B cell (primary cell): ENCODE measurements at regions of chr1 and their contacts with region 1.

Region 1: DNA sequence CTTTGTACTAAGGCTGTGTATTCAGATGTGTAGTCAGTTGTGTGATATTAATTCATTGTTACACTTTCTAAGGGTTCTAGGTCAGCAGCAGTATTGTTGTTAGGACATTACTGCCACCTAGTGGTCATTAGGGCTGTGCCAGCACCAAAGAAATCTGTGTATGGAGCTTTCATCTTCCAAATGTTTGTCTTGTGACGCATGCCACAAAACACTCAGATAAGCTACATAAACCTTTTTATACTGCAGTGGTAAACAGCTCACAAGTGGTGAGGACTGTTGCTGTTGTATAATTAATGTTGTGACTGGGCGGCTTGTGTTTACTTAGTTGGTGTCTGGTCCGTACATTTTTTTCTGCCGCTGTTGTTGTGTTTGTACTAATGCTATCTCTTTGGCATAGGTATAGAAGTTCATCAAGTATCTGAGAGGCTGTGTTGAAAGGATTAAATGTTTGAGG is 51.7 kb downstream of the S1PR1 start:
- DNase-seq: peak; percentile 83
- ATAC-seq: peak; percentile 85
- H3K4me3 ChIP-seq: no peak overlapping the region
- H3K4me3 Mint-ChIP-seq: no peak overlapping the region
- H3K27ac ChIP-seq: no peak overlapping the region
- H3K27ac Mint-ChIP-seq: peak overlapping the region; percentile 47
- H3K4me1 ChIP-seq: peaks cover 24 to 42% of the 10 kb centered on the region in 2 donors
- H3K4me1 Mint-ChIP-seq: peaks cover 34% of the 10 kb centered on the region
- H3K27me3 ChIP-seq: no peaks in the 10 kb centered on the region
- H3K27me3 Mint-ChIP-seq: no peaks in the 10 kb centered on the region
- CTCF ChIP-seq: peak; percentile 93

Region 2: GRCh38 chr1:100950781-100951180 is 337.7 kb before region 1 on chr1:
- CTCF ChIA-PET with region 1: interaction called, 17 read pairs
- POLR2A ChIA-PET with region 1: interaction called, 6 read pairs
- intact Hi-C with region 1: no loop called
- DNase-seq: no peak
- ATAC-seq: no peak
- H3K4me3 ChIP-seq: no peak overlapping the region
- H3K4me3 Mint-ChIP-seq: peak overlapping the region; percentile 67
- H3K27ac ChIP-seq: peak overlapping the region; percentile 34 to 50
- H3K27ac Mint-ChIP-seq: peak overlapping the region; percentile 65
- H3K4me1 ChIP-seq: peaks cover 33% of the 10 kb centered on the region in 2 donors
- H3K4me1 Mint-ChIP-seq: peaks cover 59% of the 10 kb centered on the region
- H3K27me3 ChIP-seq: no peaks in the 10 kb centered on the region
- H3K27me3 Mint-ChIP-seq: no peaks in the 10 kb centered on the region
- CTCF ChIP-seq: no peak

Region 3: GRCh38 chr1:101025657-101026504 is 262.6 kb before region 1 on chr1 and contains the start of gene DPH5:
- CTCF ChIA-PET with region 1: interaction called, 12 read pairs
- POLR2A ChIA-PET with region 1: no interaction called
- intact Hi-C with region 1: loop called (anchors 5 kb)
- DNase-seq: peak; percentile 90
- ATAC-seq: peak; percentile 96
- H3K4me3 ChIP-seq: peak within 1 kb of the TSS; percentile 81 to 97 (median 92)
- H3K4me3 Mint-ChIP-seq: peak within 1 kb of the TSS; percentile 98
- H3K27ac ChIP-seq: peak within 1 kb of the TSS; percentile 78 to 85
- H3K27ac Mint-ChIP-seq: peak within 1 kb of the TSS; percentile 97
- H3K4me1 ChIP-seq: peaks cover 45 to 47% of the 10 kb centered on the region in 2 donors
- H3K4me1 Mint-ChIP-seq: peaks cover 50% of the 10 kb centered on the region
- H3K27me3 ChIP-seq: no peaks in the 10 kb centered on the region
- H3K27me3 Mint-ChIP-seq: no peaks in the 10 kb centered on the region
- CTCF ChIP-seq: no peak
- total RNA-seq, gene DPH5: 39.4 and 42.5 TPM in 2 replicates

Region 4: GRCh38 chr1:101112051-101112780 is 176.3 kb before region 1 on chr1:
- CTCF ChIA-PET with region 1: interaction called, 64 read pairs
- POLR2A ChIA-PET with region 1: no interaction called
- intact Hi-C with region 1: loop called (anchors 1 kb)
- DNase-seq: peak; percentile 90
- ATAC-seq: peak; percentile 95
- H3K4me3 ChIP-seq: peak overlapping the region in 1 of 5 experiments; percentile 14
- H3K4me3 Mint-ChIP-seq: peak overlapping the region; percentile 79
- H3K27ac ChIP-seq: peak overlapping the region; percentile 80 to 95
- H3K27ac Mint-ChIP-seq: peak overlapping the region; percentile 89
- H3K4me1 ChIP-seq: peaks cover 28 to 31% of the 10 kb centered on the region in 2 donors
- H3K4me1 Mint-ChIP-seq: peaks cover 39% of the 10 kb centered on the region
- H3K27me3 ChIP-seq: no peaks in the 10 kb centered on the region
- H3K27me3 Mint-ChIP-seq: no peaks in the 10 kb centered on the region
- CTCF ChIP-seq: peak; percentile 32

Region 5: GRCh38 chr1:101238681-101239094 is 49.8 kb before region 1 on chr1:
- CTCF ChIA-PET with region 1: interaction called, 257 read pairs
- POLR2A ChIA-PET with region 1: interaction called, 11 read pairs
- intact Hi-C with region 1: loop called (anchors 1 kb)
- DNase-seq: peak; percentile 83
- ATAC-seq: peak; percentile 13
- H3K4me3 ChIP-seq: peak overlapping the region; percentile 74 to 98 (median 86)
- H3K4me3 Mint-ChIP-seq: peak overlapping the region; percentile 97
- H3K27ac ChIP-seq: peak overlapping the region; percentile 58 to 84
- H3K27ac Mint-ChIP-seq: peak overlapping the region; percentile 92
- H3K4me1 ChIP-seq: peaks cover 51 to 59% of the 10 kb centered on the region in 2 donors
- H3K4me1 Mint-ChIP-seq: peaks cover 66% of the 10 kb centered on the region
- H3K27me3 ChIP-seq: no peaks in the 10 kb centered on the region
- H3K27me3 Mint-ChIP-seq: no peaks in the 10 kb centered on the region
- CTCF ChIP-seq: peak; percentile 95

Region 6: GRCh38 chr1:101302831-101303511 is 14.5 kb after region 1 on chr1:
- CTCF ChIA-PET with region 1: interaction called, 47 read pairs
- POLR2A ChIA-PET with region 1: no interaction called
- intact Hi-C with region 1: no loop called
- DNase-seq: no peak
- ATAC-seq: no peak
- H3K4me3 ChIP-seq: no peak overlapping the region
- H3K4me3 Mint-ChIP-seq: no peak overlapping the region
- H3K27ac ChIP-seq: no peak overlapping the region
- H3K27ac Mint-ChIP-seq: no peak overlapping the region
- H3K4me1 ChIP-seq: peaks cover 8 to 12% of the 10 kb centered on the region in 2 donors
- H3K4me1 Mint-ChIP-seq: peaks cover 15% of the 10 kb centered on the region
- H3K27me3 ChIP-seq: no peaks in the 10 kb centered on the region
- H3K27me3 Mint-ChIP-seq: no peaks in the 10 kb centered on the region
- CTCF ChIP-seq: no peak

Region 7: DNA sequence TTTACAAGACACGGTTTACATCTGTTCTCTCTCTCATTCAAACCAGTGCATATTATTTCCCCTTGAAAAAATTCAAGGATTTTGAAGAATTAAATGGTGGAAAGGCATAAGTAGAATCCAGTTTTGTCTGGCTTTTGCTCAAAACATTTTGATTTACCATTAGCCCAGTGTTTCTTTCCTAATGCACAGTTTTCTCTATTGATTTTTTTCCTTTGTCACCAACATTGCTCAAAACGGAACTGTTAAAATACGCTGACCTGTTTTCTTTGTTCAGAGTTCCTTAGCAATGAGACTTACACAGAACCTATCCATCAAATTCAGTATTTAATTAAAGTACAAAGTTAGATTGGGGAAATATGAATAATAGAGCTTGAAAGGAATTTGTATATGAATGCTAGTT is 110.7 kb after region 1 on chr1:
- CTCF ChIA-PET with region 1: no interaction called
- POLR2A ChIA-PET with region 1: no interaction called
- intact Hi-C with region 1: no loop called
- DNase-seq: no peak
- ATAC-seq: no peak
- H3K4me3 ChIP-seq: no peak overlapping the region
- H3K4me3 Mint-ChIP-seq: no peak overlapping the region
- H3K27ac ChIP-seq: no peak overlapping the region
- H3K27ac Mint-ChIP-seq: no peak overlapping the region
- H3K4me1 ChIP-seq: no peaks in the 10 kb centered on the region
- H3K4me1 Mint-ChIP-seq: peaks cover 6% of the 10 kb centered on the region
- H3K27me3 ChIP-seq: no peaks in the 10 kb centered on the region
- H3K27me3 Mint-ChIP-seq: no peaks in the 10 kb centered on the region
- CTCF ChIP-seq: no peak

Region 8: GRCh38 chr1:101438359-101438758 is 149.8 kb after region 1 on chr1:
- CTCF ChIA-PET with region 1: interaction called, 26 read pairs
- POLR2A ChIA-PET with region 1: no interaction called
- intact Hi-C with region 1: no loop called
- DNase-seq: peak; percentile 39
- ATAC-seq: peak; percentile 29
- H3K4me3 ChIP-seq: no peak overlapping the region
- H3K4me3 Mint-ChIP-seq: no peak overlapping the region
- H3K27ac ChIP-seq: no peak overlapping the region
- H3K27ac Mint-ChIP-seq: no peak overlapping the region
- H3K4me1 ChIP-seq: peaks cover 33 to 34% of the 10 kb centered on the region in 2 donors
- H3K4me1 Mint-ChIP-seq: peaks cover 27% of the 10 kb centered on the region
- H3K27me3 ChIP-seq: no peaks in the 10 kb centered on the region
- H3K27me3 Mint-ChIP-seq: no peaks in the 10 kb centered on the region
- CTCF ChIP-seq: peak; percentile 19